ENCODE measurements at regions of chr10 and their contacts with region 1.

Region 1: GRCh38 chr10:15901889-15902288 is 41.6 kb upstream of the MINDY3 start:
- DNase-seq: no peak
- H3K4me3 ChIP-seq: no peak overlapping the region
- H3K27ac ChIP-seq: no peak overlapping the region
- H3K4me1 ChIP-seq: no peaks in the 10 kb centered on the region
- H3K27me3 ChIP-seq: peaks cover 4% of the 10 kb centered on the region; the same call in 1 of the 2 replicates
- CTCF ChIP-seq: no peak

Region 2: GRCh38 chr10:15775513-15775912 is 126.4 kb before region 1 on chr10:
- CTCF ChIA-PET with region 1: no interaction called
- POLR2A ChIA-PET with region 1: no interaction called
- intact Hi-C with region 1: no loop called
- DNase-seq: peak in 1 of 2 experiments; percentile 38
- H3K4me3 ChIP-seq: no peak overlapping the region
- H3K27ac ChIP-seq: no peak overlapping the region
- H3K4me1 ChIP-seq: no peaks in the 10 kb centered on the region
- H3K27me3 ChIP-seq: no peaks in the 10 kb centered on the region
- CTCF ChIP-seq: no peak

Region 3: DNA sequence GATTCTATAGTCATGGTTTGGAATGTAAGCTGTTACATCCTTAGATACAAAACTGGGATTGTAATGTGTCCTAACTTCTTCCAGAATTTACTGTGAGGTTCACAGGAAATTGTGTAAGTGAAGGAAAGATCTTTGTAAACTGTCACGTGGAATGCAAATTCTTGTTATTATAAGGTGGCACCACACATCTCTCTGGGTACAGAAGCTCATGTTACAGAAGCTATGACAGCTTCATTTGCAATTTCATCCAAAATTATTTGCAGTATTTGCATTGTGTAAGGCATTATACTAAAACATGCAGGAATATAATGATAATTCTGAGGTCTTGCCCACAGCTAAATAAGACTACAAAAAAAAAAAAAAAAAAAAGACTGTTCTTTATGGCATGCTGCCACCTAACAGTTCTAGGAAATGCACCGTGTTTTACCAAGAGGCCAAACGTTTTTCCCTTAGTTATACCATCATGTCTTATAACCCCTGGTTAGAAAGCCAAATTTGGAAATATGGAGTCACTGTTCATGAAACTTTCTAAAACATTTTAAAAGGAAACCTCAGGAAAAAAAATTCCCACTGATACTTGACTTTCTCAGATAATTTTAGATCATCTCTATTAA is 59.2 kb before region 1 on chr10:
- CTCF ChIA-PET with region 1: no interaction called
- POLR2A ChIA-PET with region 1: no interaction called
- intact Hi-C with region 1: no loop called
- DNase-seq: no peak
- H3K4me3 ChIP-seq: no peak overlapping the region
- H3K27ac ChIP-seq: no peak overlapping the region
- H3K4me1 ChIP-seq: no peaks in the 10 kb centered on the region
- H3K27me3 ChIP-seq: no peaks in the 10 kb centered on the region
- CTCF ChIP-seq: no peak

Region 4: GRCh38 chr10:16545116-16545736 is 643.3 kb after region 1 on chr10:
- CTCF ChIA-PET with region 1: no interaction called
- POLR2A ChIA-PET with region 1: no interaction called
- intact Hi-C with region 1: loop called (anchors 10 kb)
- DNase-seq: peak in 1 of 2 experiments; percentile 37
- H3K4me3 ChIP-seq: no peak overlapping the region
- H3K27ac ChIP-seq: no peak overlapping the region
- H3K4me1 ChIP-seq: no peaks in the 10 kb centered on the region
- H3K27me3 ChIP-seq: no peaks in the 10 kb centered on the region
- CTCF ChIP-seq: peak; percentile 62

Region 5: GRCh38 chr10:17586821-17587234 is 1684.9 kb after region 1 on chr10:
- CTCF ChIA-PET with region 1: no interaction called
- POLR2A ChIA-PET with region 1: no interaction called
- intact Hi-C with region 1: no loop called
- DNase-seq: no peak
- H3K4me3 ChIP-seq: no peak overlapping the region
- H3K27ac ChIP-seq: no peak overlapping the region
- H3K4me1 ChIP-seq: no peaks in the 10 kb centered on the region
- H3K27me3 ChIP-seq: no peaks in the 10 kb centered on the region
- CTCF ChIP-seq: no peak

Measured in PC-9 (cell line).